T-cell (primary cell): ENCODE measurements at regions of chr3 and their contacts with region 1.

Region 1: GRCh38 chr3:64508140-64508539 is 179.7 kb downstream of the ADAMTS9 start:
- DNase-seq: no peak
- ATAC-seq: no peak
- H3K4me3 ChIP-seq: no peak overlapping the region
- H3K4me3 Mint-ChIP-seq: no peak overlapping the region
- H3K27ac ChIP-seq: no peak overlapping the region
- H3K27ac Mint-ChIP-seq: no peak overlapping the region
- H3K4me1 ChIP-seq: no peaks in the 10 kb centered on the region
- H3K4me1 Mint-ChIP-seq: no peaks in the 10 kb centered on the region
- H3K27me3 ChIP-seq: no peaks in the 10 kb centered on the region
- H3K27me3 Mint-ChIP-seq: peaks cover 6 to 12% of the 10 kb centered on the region in 2 donors

Region 2: DNA sequence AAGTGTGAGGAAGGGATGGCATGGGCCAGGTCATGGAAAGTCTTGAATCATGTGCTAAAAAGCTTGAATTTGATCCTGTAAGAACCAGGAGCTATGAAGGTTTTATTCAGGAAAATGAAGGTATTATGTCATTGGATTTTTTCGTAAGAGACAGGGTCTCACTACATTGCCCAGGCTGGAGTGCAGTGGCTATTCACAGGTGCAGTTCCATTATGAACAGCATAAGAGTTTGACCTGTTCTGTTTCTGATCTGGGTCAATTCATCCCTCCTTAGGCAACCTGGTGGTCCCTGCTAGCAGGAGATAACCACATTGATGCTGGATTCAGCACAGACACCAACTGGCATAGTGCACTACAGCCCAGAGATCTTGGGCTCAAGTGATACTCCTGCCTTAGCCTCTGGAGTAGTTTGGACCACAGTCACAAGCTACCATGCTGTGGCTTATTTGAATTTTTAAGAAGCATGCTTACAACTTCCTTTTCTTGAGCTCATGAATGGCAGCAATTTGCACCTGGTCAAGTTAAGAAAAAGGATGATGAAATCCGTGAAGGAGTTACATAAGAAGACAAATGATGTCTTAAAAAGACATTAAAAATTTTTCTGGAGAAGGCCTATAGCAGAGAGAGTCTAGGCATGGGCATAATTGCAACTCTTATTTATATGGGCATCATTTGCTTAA is 1712.0 kb before region 1 on chr3:
- CTCF ChIA-PET with region 1: no interaction called
- POLR2A ChIA-PET with region 1: no interaction called
- DNase-seq: no peak
- ATAC-seq: no peak
- H3K4me3 ChIP-seq: no peak overlapping the region
- H3K4me3 Mint-ChIP-seq: no peak overlapping the region
- H3K27ac ChIP-seq: no peak overlapping the region
- H3K27ac Mint-ChIP-seq: no peak overlapping the region
- H3K4me1 ChIP-seq: no peaks in the 10 kb centered on the region
- H3K4me1 Mint-ChIP-seq: no peaks in the 10 kb centered on the region
- H3K27me3 ChIP-seq: no peaks in the 10 kb centered on the region
- H3K27me3 Mint-ChIP-seq: no peaks in the 10 kb centered on the region

Region 3: GRCh38 chr3:64533617-64534317 is 25.6 kb after region 1 on chr3:
- CTCF ChIA-PET with region 1: interaction called in 1 of 2 experiments, 14 read pairs
- POLR2A ChIA-PET with region 1: no interaction called
- DNase-seq: peak in 13 of 35 experiments; percentile 2 to 19 (median 3)
- ATAC-seq: peak in 2 of 4 experiments; percentile 43 to 53
- H3K4me3 ChIP-seq: no peak overlapping the region
- H3K4me3 Mint-ChIP-seq: no peak overlapping the region
- H3K27ac ChIP-seq: no peak overlapping the region
- H3K27ac Mint-ChIP-seq: no peak overlapping the region
- H3K4me1 ChIP-seq: no peaks in the 10 kb centered on the region
- H3K4me1 Mint-ChIP-seq: peaks cover 0 to 7% (median 5%) of the 10 kb centered on the region in 3 donors
- H3K27me3 ChIP-seq: peaks cover 0 to 2% of the 10 kb centered on the region in 2 experiments
- H3K27me3 Mint-ChIP-seq: peaks cover 4 to 12% of the 10 kb centered on the region in 2 donors